ENCODE measurements at regions of chr17 and their contacts with region 1.

Region 1: GRCh38 chr17:32253117-32253611 is 12.5 kb upstream of the RHBDL3 start:
- DNase-seq: no peak
- H3K4me3 ChIP-seq: no peak overlapping the region
- H3K27ac ChIP-seq: no peak overlapping the region
- H3K4me1 ChIP-seq: peaks cover 0 to 9% (median 2%) of the 10 kb centered on the region in 4 donors
- H3K27me3 ChIP-seq: no peaks in the 10 kb centered on the region
- CTCF ChIP-seq: peak; percentile 91 to 99 (median 95)
- EP300 ChIP-seq: no peak
- POLR2A ChIP-seq: no peak

Region 2: DNA sequence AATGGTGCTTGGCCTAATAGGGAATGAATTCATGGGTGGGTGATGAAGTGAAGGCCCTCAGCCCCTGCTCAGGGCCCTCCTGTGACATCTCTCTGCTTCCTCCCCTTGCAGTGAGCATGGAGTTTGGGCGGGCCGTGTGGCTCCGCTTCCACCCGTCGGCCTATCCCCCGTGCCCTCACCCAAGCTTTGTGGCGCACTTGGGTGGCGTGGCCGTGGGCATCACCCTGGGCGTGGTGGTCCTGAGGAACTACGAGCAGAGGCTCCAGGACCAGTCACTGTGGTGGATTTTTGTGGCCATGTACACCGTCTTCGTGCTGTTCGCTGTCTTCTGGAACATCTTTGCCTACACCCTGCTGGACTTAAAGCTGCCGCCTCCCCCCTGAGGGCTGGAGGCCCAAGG is 67.7 kb after region 1 on chr17:
- intact Hi-C with region 1: loop called (anchors 1 kb)
- DNase-seq: no peak
- H3K4me3 ChIP-seq: no peak overlapping the region
- H3K27ac ChIP-seq: no peak overlapping the region
- H3K4me1 ChIP-seq: peaks cover 0 to 10% (median 2%) of the 10 kb centered on the region in 4 donors
- H3K27me3 ChIP-seq: no peaks in the 10 kb centered on the region
- CTCF ChIP-seq: no peak
- EP300 ChIP-seq: no peak
- POLR2A ChIP-seq: no peak

Region 3: GRCh38 chr17:32355649-32356377 is 102.6 kb after region 1 on chr17:
- intact Hi-C with region 1: no loop called
- DNase-seq: no peak
- H3K4me3 ChIP-seq: peak overlapping the region in 2 of 4 donors; percentile 6 to 11
- H3K27ac ChIP-seq: peak overlapping the region in 1 of 4 donors; percentile 32
- H3K4me1 ChIP-seq: peaks cover 54 to 70% (median 69%) of the 10 kb centered on the region in 4 donors
- H3K27me3 ChIP-seq: no peaks in the 10 kb centered on the region
- CTCF ChIP-seq: no peak
- EP300 ChIP-seq: no peak
- POLR2A ChIP-seq: no peak

Measured in esophagus muscularis mucosa (tissue), 4 donors.